Left cardiac atrium (tissue), 4 donors: ENCODE measurements at regions of chr4 and their contacts with region 1.

Region 1: GRCh38 chr4:89657931-89658700 is 178.8 kb downstream of the SNCA start:
- DNase-seq: no peak
- ATAC-seq: no peak

Region 2: DNA sequence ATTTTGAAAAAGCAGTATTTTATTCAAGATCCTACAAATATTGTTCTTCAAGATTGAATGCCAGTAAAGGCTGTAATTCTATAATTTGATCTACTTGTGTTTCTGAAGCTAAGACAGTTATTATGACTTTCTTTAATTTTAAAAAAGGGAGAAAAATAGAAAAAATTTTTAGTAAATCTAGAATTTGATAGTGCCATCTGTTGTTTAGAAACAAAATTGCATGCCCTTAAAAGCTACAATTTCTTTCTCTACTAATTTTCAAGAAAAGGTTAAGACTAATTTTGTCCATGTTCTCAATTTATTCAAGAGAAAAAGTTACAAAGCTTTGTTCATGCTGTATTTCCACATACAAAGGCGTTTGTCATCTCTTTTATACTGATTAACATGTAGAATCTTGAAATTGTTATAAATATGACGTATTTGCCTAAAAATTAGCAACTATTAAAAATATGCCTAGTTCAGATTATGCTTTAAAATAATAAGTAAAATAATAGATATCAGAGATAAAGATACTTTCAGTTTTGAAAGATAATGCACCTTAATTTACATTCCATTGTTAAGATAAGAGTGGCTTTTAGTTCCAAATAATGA is 211.0 kb after region 1 on chr4:
- intact Hi-C with region 1: loop called in 1 of 2 experiments (anchors 2 kb)
- DNase-seq: no peak
- ATAC-seq: no peak